Aorta (tissue), 5 donors: ENCODE measurements at regions of chr17 and their contacts with region 1.

Region 1: DNA sequence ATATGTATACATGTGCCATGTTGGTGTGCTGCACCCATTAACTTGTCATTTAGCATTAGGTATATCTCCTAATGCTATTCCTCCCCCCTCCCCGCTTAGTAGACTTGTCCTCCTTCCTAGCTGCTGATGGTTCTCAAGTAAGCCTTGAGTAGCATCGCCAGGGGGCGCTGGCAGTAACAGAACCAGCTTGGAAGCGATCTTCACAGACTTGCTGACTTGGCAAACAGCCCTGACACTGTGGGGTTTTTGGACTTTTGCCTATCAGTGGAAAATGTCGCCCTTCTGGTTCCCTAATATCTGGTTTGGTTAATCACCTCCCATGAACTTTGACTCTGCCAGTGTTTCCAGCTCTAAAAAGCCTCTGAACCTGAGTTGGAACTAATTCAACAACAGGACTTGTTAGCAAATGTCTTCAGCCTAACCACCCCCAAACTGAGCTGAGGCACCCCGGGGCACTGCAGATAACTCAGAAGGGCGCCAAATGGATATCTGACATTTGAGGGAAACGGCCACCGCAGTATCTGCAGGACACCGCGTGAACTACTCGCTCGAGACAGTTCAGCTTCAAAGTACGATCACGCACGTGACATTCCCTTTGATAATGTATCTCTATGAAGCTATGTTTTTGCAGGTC is 15.4 kb upstream of the SPATA32 start:
- DNase-seq: peak; percentile 95 to 97
- ATAC-seq: peak; percentile 85
- H3K4me3 ChIP-seq: no peak overlapping the region
- H3K27ac ChIP-seq: peak overlapping the region in 1 of 2 donors; percentile 32
- H3K4me1 ChIP-seq: peaks cover 0 to 2% of the 10 kb centered on the region in 2 donors
- H3K27me3 ChIP-seq: no peaks in the 10 kb centered on the region

Region 2: GRCh38 chr17:45218895-45219661 is 58.3 kb before region 1 on chr17:
- intact Hi-C with region 1: loop called in 1 of 2 experiments (anchors 5 kb)
- DNase-seq: peak; percentile 87 to 97
- ATAC-seq: peak; percentile 92
- H3K4me3 ChIP-seq: no peak overlapping the region
- H3K27ac ChIP-seq: no peak overlapping the region
- H3K4me1 ChIP-seq: no peaks in the 10 kb centered on the region
- H3K27me3 ChIP-seq: no peaks in the 10 kb centered on the region

Region 3: GRCh38 chr17:45317112-45317928 is 40.0 kb after region 1 on chr17:
- intact Hi-C with region 1: loop called in 1 of 2 experiments (anchors 2 kb)
- DNase-seq: peak; percentile 100
- ATAC-seq: peak; percentile 96
- H3K4me3 ChIP-seq: no peak overlapping the region
- H3K27ac ChIP-seq: peak overlapping the region in 1 of 2 donors; percentile 34
- H3K4me1 ChIP-seq: no peaks in the 10 kb centered on the region
- H3K27me3 ChIP-seq: no peaks in the 10 kb centered on the region

Region 4: DNA sequence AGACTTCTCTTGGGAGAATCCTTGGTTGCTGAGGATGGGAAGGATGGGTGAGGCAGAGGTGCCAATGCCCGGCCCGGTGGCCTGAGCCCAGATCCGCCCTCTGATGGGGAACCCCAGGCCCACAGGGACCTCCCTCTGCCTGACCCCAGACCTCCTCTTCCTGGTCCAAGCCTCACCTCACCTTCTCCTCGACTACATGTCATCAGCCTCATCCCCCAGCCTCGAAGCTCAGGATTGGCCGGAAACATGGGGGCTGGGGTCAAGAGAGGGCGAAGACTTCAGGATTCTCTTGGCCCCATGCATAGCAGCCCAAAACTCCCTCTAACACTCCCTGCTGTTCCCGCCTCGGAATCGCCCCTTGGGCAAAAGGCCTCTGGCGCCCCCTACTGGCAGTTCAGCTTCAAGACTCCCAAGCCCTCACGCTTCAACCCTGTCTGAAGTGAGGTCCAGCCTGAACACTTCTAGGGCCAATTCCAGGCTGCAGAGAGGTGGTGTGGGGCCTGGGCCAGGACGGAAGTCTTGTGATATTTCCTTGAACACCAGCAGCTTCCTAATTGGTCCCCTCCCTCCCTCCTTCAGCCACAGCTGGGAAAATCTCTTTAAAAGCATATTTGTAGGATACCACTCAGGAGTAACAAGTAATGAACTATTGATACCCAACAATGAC is 108.1 kb after region 1 on chr17:
- intact Hi-C with region 1: loop called (anchors 1 kb)
- DNase-seq: peak; percentile 91 to 97
- ATAC-seq: peak; percentile 93
- H3K4me3 ChIP-seq: no peak overlapping the region
- H3K27ac ChIP-seq: no peak overlapping the region
- H3K4me1 ChIP-seq: no peaks in the 10 kb centered on the region
- H3K27me3 ChIP-seq: no peaks in the 10 kb centered on the region